Naive thymus-derived CD8-positive, alpha-beta T cell (primary cell): ENCODE measurements at regions of chr1 and their contacts with region 1.

Region 1: DNA sequence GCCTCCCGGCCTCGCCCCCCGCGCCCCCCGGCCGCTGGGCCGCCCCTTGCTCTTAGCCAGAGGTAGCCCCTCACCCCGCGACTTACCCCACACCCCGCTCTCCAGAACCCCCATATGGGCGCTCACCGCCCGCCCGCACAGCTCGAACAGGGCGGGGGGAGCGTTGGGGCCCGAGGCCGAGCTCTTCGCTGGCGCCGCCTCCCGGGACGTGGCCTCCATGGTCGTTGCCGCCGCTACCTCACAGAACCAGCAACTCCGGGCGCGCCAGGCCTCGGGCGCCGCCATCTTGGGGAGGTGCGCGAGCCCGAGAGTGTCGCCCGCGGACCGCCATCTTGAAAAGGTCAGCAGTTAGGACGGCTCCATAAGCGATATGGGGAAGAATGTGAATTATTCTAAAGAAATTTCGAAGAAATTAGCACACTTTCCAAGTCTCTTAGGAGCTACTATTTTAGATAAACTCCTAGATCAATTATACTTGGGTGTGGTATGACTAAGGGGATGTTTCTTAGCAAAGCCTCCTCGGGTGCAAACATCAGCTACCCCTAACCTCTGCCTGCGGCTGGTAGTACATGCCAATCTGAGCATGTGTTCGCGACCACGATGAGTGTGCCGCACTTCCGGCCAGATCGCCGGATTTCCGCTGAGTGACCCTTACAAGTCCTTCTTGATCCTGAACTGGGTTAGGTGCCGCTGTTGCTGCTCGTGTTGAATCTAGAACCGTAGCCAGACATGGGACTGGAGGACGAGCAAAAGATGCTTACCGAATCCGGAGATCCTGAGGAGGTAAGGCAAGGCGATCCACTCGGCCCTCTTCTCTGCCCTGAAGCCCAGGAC is at the starts of genes LRRC41 and UQCRH:
- DNase-seq: peak; percentile 85 to 98 (median 92)
- ATAC-seq: peak; percentile 86 to 88
- H3K4me3 Mint-ChIP-seq: peak within 1 kb of the TSS; percentile 91 to 100 (median 97)
- H3K27ac Mint-ChIP-seq: peak within 1 kb of the TSS; percentile 96 to 99 (median 98)
- H3K4me1 Mint-ChIP-seq: peaks cover 26 to 67% (median 57%) of the 10 kb centered on the region in 4 donors
- H3K27me3 Mint-ChIP-seq: no peaks in the 10 kb centered on the region
- polyA plus RNA-seq, gene LRRC41: 43.7 to 46.5 (median 44.6) TPM
- polyA plus RNA-seq, gene UQCRH: 293 to 371 (median 330) TPM

Region 2: DNA sequence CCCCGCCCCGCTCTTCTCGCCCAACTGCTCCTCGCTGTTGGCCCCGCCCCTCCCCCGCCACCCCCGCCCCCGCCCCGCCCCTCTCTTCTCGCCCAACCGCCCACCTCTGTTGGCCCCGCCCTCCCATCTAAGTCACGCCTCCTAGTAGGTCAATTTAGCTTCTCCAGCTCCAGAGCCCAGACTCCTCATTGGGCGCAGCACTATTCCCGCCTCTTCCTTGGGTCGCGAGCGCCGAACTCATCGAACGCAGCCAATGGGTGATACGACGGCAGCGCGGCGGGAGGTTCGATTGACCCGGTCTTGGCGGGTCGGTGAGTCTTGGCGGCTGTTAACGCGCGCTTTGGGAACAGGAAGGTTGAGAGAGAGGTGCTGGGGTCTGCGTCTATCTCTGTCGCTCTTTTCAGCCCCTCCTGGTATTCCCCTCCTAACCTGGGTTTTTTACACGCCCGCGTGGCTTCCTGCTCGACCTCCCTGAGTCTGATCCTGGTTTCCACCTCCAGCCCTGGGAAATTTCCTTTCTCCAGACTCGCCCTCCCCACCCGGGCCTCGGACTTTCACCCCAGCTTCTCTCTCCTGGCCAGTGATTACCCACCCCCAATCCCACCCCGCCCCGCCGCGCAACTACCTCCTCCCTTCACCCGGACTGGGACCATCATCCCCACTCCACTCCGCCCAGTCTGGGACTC is 55.7 kb before region 1 on chr1 and contains the start of gene RAD54L:
- POLR2A ChIA-PET with region 1: interaction called, 29 read pairs
- DNase-seq: peak; percentile 88 to 98 (median 94)
- ATAC-seq: peak; percentile 93 to 94
- H3K4me3 Mint-ChIP-seq: peak within 1 kb of the TSS; percentile 82 to 96 (median 92)
- H3K27ac Mint-ChIP-seq: peak within 1 kb of the TSS; percentile 71 to 94 (median 86)
- H3K4me1 Mint-ChIP-seq: peaks cover 8 to 21% (median 19%) of the 10 kb centered on the region in 4 donors
- H3K27me3 Mint-ChIP-seq: no peaks in the 10 kb centered on the region
- polyA plus RNA-seq, gene RAD54L: 0.27 TPM in 1 of 3 donors, not detected in the others

Region 3: GRCh38 chr1:46340404-46341221 is 37.4 kb after region 1 on chr1 and contains the start of gene NSUN4:
- POLR2A ChIA-PET with region 1: interaction called, 30 read pairs
- DNase-seq: peak; percentile 68 to 89 (median 84)
- ATAC-seq: peak; percentile 87 to 88
- H3K4me3 Mint-ChIP-seq: peak within 1 kb of the TSS; percentile 97 to 100 (median 100)
- H3K27ac Mint-ChIP-seq: peak within 1 kb of the TSS; percentile 95 to 100 (median 100)
- H3K4me1 Mint-ChIP-seq: peaks cover 31 to 59% (median 50%) of the 10 kb centered on the region in 4 donors
- H3K27me3 Mint-ChIP-seq: no peaks in the 10 kb centered on the region
- polyA plus RNA-seq, gene NSUN4: 10.3 to 14.0 (median 12.3) TPM